HEK293T (cell line): ENCODE measurements at regions of chr6 and their contacts with region 1.

Region 1: GRCh38 chr6:31729515-31729978 is 448 bp upstream of the DDAH2 start:
- DNase-seq: peak; percentile 77

Region 2: DNA sequence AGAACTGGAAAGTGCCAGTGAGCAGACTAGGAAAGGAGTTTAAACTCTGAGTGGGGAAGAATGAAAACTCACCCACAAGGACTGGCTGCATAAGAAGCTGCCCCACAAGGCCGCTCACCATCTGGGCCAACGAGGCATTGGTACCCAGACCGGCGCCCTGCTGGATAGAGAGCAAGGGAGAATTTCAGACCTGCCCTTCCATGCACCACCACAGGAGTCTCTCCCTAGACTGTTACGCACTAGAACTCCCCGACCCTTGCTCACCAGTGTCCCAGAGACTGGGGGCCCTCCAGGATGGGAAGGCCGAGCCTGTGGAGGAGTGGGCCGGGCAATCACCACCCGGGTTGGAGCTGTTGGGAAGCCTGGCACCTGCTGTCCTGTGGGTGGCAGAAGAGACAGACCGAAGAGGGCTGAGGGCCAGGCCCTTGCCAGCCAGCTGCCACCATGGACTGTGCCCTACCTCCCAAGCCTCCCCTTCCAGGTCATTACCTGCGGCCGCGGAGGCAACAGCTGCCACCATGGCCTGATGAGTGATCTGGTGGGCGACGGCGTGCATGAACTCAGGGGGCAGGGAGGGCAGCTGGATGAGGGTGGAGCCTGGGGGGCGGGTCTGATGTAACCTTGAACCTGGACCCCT is 85.6 kb before region 1 on chr6:
- CTCF ChIA-PET with region 1: no interaction called
- POLR2A ChIA-PET with region 1: no interaction called
- DNase-seq: no peak

Region 3: GRCh38 chr6:31702819-31703522 is 26.6 kb before region 1 on chr6 and contains the start of gene ABHD16A:
- CTCF ChIA-PET with region 1: no interaction called
- POLR2A ChIA-PET with region 1: interaction called, 13 read pairs
- DNase-seq: peak; percentile 99

Region 4: DNA sequence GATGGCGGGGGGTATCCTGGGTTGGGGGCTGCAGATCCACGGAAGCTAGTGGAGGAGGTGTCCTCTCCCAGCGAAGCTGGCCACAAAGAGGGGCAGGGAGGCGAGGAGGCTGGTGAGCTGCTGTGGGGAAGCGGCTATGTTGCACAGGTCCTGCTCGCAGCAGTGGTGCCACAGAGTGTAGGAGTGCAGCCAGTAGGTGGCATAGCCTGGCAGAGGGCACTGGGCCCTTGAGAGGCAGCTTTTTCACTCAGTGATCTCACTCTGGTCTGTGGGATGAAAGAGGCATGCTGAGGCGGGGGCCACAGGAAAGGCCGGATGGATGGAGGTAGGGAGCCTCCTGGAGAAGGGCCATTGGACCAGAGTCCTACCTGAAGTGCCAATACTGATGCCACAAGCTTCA is 17.3 kb before region 1 on chr6:
- CTCF ChIA-PET with region 1: interaction called, 13 read pairs
- POLR2A ChIA-PET with region 1: interaction called, 6 read pairs
- DNase-seq: no peak

Region 5: DNA sequence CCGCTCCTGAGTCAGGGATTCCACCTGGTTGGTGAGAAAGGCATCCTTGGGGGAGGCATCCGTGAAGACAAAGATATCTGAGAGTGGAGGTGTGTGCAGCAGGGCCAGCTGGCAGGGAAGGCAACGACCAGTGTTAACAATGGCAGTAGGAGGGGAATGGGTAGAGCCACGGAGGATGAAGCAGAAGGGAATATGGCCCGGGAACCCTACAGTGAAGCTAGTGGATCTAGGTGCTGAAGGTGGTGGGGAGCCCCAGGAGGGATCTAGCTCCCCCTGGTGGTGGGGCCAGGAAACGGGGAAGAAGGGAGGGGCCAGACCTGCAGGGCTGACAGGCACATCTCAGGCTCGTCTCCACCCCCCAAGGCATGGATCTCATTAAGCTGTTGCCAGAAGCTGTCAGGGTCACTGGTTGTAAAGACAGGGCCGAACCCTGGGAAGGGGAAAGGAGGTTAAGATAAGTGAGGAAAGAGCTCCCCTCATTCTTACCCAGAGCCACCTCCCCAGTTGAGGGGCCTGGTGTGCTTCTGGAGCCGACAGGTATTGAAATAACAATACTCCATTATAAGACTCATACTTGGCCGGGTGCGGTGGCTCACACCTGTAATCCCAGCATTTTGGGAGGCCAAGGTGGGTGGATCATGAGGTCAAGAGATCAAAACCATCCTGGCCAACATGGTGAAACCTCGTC is 40.3 kb after region 1 on chr6:
- CTCF ChIA-PET with region 1: interaction called, 19 read pairs
- POLR2A ChIA-PET with region 1: interaction called, 7 read pairs
- DNase-seq: peak; percentile 95

Region 6: DNA sequence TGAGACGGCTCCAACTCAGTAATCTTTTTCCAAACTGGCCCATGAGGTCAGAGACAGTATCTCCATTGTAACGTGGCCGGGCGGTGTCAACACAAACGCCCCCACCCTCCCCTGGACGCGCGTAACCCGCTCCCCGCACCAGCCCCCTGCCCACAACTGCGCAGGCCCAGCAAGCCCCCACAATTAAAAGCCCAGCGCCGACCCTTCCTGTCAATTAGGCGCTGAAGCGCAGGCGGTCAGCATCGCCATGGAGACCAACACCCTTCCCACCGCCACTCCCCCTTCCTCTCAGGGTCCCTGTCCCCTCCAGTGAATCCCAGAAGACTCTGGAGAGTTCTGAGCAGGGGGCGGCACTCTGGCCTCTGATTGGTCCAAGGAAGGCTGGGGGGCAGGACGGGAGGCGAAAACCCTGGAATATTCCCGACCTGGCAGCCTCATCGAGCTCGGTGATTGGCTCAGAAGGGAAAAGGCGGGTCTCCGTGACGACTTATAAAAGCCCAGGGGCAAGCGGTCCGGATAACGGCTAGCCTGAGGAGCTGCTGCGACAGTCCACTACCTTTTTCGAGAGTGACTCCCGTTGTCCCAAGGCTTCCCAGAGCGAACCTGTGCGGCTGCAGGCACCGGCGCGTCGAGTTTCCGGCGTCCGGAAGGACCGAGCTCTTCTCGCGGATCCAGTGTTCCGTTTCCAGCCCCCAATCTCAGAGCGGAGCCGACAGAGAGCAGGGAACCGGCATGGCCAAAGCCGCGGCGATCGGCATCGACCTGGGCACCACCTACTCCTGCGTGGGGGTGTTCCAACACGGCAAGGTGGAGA is 85.7 kb after region 1 on chr6 and contains the starts of genes HSPA1A and HSPA1L:
- CTCF ChIA-PET with region 1: no interaction called
- POLR2A ChIA-PET with region 1: interaction called, 13 read pairs
- DNase-seq: no peak